ENCODE measurements at regions of chr17 and their contacts with region 1.

Region 1: DNA sequence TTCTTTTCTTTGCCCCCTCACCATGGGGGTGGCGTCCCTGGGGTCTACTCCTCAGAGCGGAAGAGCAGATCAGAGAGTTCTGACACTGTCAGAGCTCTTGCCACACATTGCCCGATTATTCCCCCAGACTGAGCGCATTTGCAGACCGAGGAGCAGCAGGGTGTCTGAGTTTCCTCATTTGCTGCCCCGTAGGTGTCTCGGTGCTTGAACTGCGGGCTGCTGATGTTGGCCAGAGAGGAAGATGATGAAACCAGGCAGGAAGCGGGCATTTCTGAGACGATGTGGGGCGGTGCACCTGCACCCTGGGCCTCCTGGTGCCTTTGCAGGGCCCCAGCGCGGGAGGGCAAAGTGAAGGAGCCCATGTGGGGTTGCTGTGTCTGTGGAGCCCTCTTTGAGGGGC is 55.2 kb downstream of the ARSG start:
- DNase-seq: peak; percentile 38 to 81 (median 41)
- ATAC-seq: peak; percentile 85
- H3K4me3 ChIP-seq: no peak overlapping the region
- H3K4me1 ChIP-seq: no peaks in the 10 kb centered on the region
- CTCF ChIP-seq: no peak

Region 2: GRCh38 chr17:68291844-68292695 is 54.4 kb before region 1 on chr17:
- intact Hi-C with region 1: loop called in 1 of 2 experiments (anchors 10 kb)
- DNase-seq: peak; percentile 75 to 95 (median 83)
- ATAC-seq: peak; percentile 86
- H3K4me3 ChIP-seq: peak overlapping the region; percentile 17
- H3K4me1 ChIP-seq: peaks cover 19% of the 10 kb centered on the region
- CTCF ChIP-seq: no peak

Measured in mucosa of descending colon (tissue), 3 donors.